Activated CD8-positive, alpha-beta T cell treated with anti-CD3 and anti-CD28 coated beads for 36 hours (primary cell): ENCODE measurements at regions of chr1 and their contacts with region 1.

Region 1: GRCh38 chr1:150072959-150073358 is 5.4 kb downstream of the VPS45 start:
- DNase-seq: no peak
- ATAC-seq: peak; percentile 51
- H3K4me3 Mint-ChIP-seq: no peak overlapping the region
- H3K27ac Mint-ChIP-seq: no peak overlapping the region
- H3K4me1 Mint-ChIP-seq: peaks cover 27% of the 10 kb centered on the region
- H3K27me3 Mint-ChIP-seq: no peaks in the 10 kb centered on the region
- CTCF ChIP-seq: peak; percentile 62

Region 2: DNA sequence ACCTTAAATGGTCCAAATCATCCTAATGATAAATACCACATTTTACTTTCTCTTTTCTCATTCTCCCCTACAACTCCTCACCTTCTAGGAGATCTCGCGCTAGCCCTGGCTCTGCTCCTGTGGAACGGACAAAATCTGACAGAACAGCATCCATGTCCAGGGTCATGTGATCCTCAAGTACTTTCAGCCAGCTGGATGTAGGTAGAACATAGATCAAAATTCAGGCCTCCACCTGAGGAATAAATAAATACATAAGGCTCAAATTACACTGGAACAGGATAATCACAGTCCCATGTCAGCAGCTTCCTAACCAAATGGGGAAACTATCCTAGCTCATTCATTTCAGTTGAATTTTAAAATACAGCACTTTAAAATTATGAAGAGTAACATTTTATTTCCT is 95.6 kb before region 1 on chr1:
- CTCF ChIA-PET with region 1: no interaction called
- POLR2A ChIA-PET with region 1: no interaction called
- intact Hi-C with region 1: no loop called
- DNase-seq: no peak
- ATAC-seq: no peak
- H3K4me3 Mint-ChIP-seq: no peak overlapping the region
- H3K27ac Mint-ChIP-seq: no peak overlapping the region
- H3K4me1 Mint-ChIP-seq: peaks cover 27% of the 10 kb centered on the region
- H3K27me3 Mint-ChIP-seq: no peaks in the 10 kb centered on the region
- CTCF ChIP-seq: no peak

Region 3: GRCh38 chr1:150001415-150001814 is 71.5 kb before region 1 on chr1:
- CTCF ChIA-PET with region 1: no interaction called
- POLR2A ChIA-PET with region 1: no interaction called
- intact Hi-C with region 1: no loop called
- DNase-seq: no peak
- ATAC-seq: no peak
- H3K4me3 Mint-ChIP-seq: no peak overlapping the region
- H3K27ac Mint-ChIP-seq: no peak overlapping the region
- H3K4me1 Mint-ChIP-seq: peaks cover 66% of the 10 kb centered on the region
- H3K27me3 Mint-ChIP-seq: no peaks in the 10 kb centered on the region
- CTCF ChIP-seq: no peak

Region 4: GRCh38 chr1:150021191-150021694 is 51.7 kb before region 1 on chr1:
- CTCF ChIA-PET with region 1: no interaction called
- POLR2A ChIA-PET with region 1: no interaction called
- intact Hi-C with region 1: no loop called
- DNase-seq: no peak
- ATAC-seq: no peak
- H3K4me3 Mint-ChIP-seq: no peak overlapping the region
- H3K27ac Mint-ChIP-seq: no peak overlapping the region
- H3K4me1 Mint-ChIP-seq: no peaks in the 10 kb centered on the region
- H3K27me3 Mint-ChIP-seq: peaks cover 7% of the 10 kb centered on the region
- CTCF ChIP-seq: no peak

Region 5: GRCh38 chr1:150168960-150169601 is 96.1 kb after region 1 on chr1:
- CTCF ChIA-PET with region 1: interaction called, 118 read pairs
- POLR2A ChIA-PET with region 1: interaction called, 3 read pairs
- intact Hi-C with region 1: loop called (anchors 2 kb)
- DNase-seq: peak; percentile 82
- ATAC-seq: peak; percentile 79
- H3K4me3 Mint-ChIP-seq: no peak overlapping the region
- H3K27ac Mint-ChIP-seq: no peak overlapping the region
- H3K4me1 Mint-ChIP-seq: no peaks in the 10 kb centered on the region
- H3K27me3 Mint-ChIP-seq: no peaks in the 10 kb centered on the region
- CTCF ChIP-seq: peak; percentile 72

Region 6: DNA sequence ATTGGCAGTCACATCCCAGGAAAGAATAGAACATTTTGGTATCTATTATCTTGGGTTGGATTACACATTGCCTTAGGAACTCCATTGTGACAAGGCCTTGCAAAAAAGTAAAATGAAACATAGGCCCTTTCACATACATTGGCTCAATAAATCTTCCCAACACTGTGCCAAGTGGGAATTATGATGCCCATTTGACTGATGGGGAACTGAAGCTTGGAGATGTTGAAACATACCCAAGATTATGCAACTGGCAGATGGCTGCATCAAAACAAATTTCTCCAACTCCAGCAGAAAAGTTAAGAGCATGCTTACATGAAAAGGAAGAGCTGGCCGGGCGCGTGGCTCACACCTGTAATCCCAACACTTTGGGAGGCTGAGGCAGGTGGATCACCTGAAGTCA is 103.6 kb after region 1 on chr1:
- CTCF ChIA-PET with region 1: interaction called, 54 read pairs
- POLR2A ChIA-PET with region 1: interaction called, 3 read pairs
- intact Hi-C with region 1: no loop called
- DNase-seq: no peak
- ATAC-seq: no peak
- H3K4me3 Mint-ChIP-seq: no peak overlapping the region
- H3K27ac Mint-ChIP-seq: no peak overlapping the region
- H3K4me1 Mint-ChIP-seq: no peaks in the 10 kb centered on the region
- H3K27me3 Mint-ChIP-seq: no peaks in the 10 kb centered on the region
- CTCF ChIP-seq: no peak